Naive thymus-derived CD8-positive, alpha-beta T cell (primary cell): ENCODE measurements at regions of chr17 and their contacts with region 1.

Region 1: DNA sequence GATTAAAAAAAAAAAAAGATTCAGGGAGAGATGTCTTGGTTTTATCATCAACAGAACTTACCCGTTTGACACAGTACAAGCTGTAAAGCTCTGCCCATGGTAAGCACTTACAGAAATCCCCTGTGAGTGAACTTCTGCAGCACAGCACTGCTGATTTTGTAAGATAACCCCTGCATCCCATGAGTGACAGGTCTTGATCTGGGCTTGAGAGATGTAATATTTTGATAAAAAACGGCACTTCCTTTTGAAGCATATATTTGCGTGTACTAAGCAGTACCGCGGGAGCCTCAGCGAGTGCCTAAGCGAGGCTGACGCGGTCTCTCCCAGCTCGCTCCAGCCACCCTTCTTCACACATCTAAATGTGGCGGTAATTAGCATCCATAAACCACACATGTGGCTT is 50.5 kb downstream of the IKZF3 start:
- DNase-seq: peak; percentile 33 to 84 (median 71)
- ATAC-seq: peak; percentile 93 to 97
- H3K4me3 Mint-ChIP-seq: peak overlapping the region; percentile 71 to 87 (median 79)
- H3K27ac Mint-ChIP-seq: peak overlapping the region; percentile 89 to 98 (median 95)
- H3K4me1 Mint-ChIP-seq: peaks cover 32 to 84% (median 75%) of the 10 kb centered on the region in 4 donors
- H3K27me3 Mint-ChIP-seq: no peaks in the 10 kb centered on the region

Region 2: GRCh38 chr17:39794249-39794970 is 19.2 kb before region 1 on chr17:
- POLR2A ChIA-PET with region 1: interaction called, 36 read pairs
- DNase-seq: peak in 4 of 10 donors; percentile 32 to 53 (median 42)
- ATAC-seq: peak; percentile 69 to 79
- H3K4me3 Mint-ChIP-seq: peak overlapping the region; percentile 60 to 86 (median 74)
- H3K27ac Mint-ChIP-seq: peak overlapping the region; percentile 84 to 98 (median 94)
- H3K4me1 Mint-ChIP-seq: peaks cover 46 to 87% (median 81%) of the 10 kb centered on the region in 4 donors
- H3K27me3 Mint-ChIP-seq: no peaks in the 10 kb centered on the region

Region 3: DNA sequence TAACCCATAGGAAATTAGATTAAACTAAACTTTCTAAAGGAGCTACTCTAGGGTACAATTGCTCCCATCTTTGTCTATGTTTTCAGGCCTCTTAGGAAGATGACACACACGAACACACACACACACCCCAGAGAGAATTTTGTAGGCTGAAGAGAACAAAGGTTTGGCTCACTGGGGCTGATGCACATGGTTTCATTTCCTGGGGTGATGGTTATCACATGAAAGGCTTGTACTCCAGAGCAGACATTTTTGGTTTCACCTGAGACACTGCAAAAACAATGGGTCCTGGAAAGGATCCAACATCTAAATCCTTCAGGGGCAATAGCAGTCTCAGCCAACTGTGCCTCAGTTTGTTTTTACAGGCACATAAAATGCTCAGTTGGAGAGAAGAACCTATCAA is 13.1 kb before region 1 on chr17:
- POLR2A ChIA-PET with region 1: interaction called, 36 read pairs
- DNase-seq: peak in 9 of 10 donors; percentile 51 to 85 (median 68)
- ATAC-seq: peak; percentile 95 to 100
- H3K4me3 Mint-ChIP-seq: peak overlapping the region; percentile 4 to 77 (median 71)
- H3K27ac Mint-ChIP-seq: peak overlapping the region; percentile 92 to 99 (median 94)
- H3K4me1 Mint-ChIP-seq: peaks cover 37 to 77% (median 67%) of the 10 kb centered on the region in 4 donors
- H3K27me3 Mint-ChIP-seq: no peaks in the 10 kb centered on the region

Region 4: GRCh38 chr17:40516581-40517285 is 703.1 kb after region 1 on chr17:
- POLR2A ChIA-PET with region 1: no interaction called
- DNase-seq: peak in 9 of 10 donors; percentile 47 to 89 (median 78)
- ATAC-seq: peak; percentile 85 to 87
- H3K4me3 Mint-ChIP-seq: peak overlapping the region; percentile 58 to 85 (median 76)
- H3K27ac Mint-ChIP-seq: peak overlapping the region; percentile 32 to 95 (median 90)
- H3K4me1 Mint-ChIP-seq: peaks cover 43 to 65% (median 58%) of the 10 kb centered on the region in 4 donors
- H3K27me3 Mint-ChIP-seq: peaks cover 0 to 15% (median 8%) of the 10 kb centered on the region in 5 donors